IMR-90 (cell line): ENCODE measurements at regions of chr11 and their contacts with region 1.

Region 1: DNA sequence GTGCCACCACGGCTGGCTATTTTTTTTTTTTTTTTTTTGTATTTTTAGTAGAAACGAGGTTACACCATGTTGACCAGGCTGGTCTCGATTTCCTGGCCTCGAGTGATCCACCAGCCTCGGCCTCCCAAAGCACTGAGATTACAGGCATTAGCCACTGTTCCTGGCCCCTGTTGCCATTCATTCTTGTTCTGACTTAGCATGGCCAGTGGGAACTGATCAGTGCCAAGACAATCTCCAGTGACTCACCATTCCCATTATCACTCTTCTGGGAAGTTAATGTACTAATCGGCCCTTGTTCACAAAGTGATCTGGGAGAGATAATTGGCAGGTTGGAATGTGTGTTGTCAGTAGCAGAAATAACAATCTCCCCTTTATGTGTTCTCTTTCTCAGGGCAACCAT is 1099.4 kb downstream of the JRKL start:
- DNase-seq: no peak
- ATAC-seq: no peak
- H3K4me3 ChIP-seq: no peak overlapping the region
- H3K27ac ChIP-seq: no peak overlapping the region
- H3K4me1 ChIP-seq: no peaks in the 10 kb centered on the region
- H3K27me3 ChIP-seq: no peaks in the 10 kb centered on the region
- CTCF ChIP-seq: no peak
- POLR2A ChIP-seq: no peak
- RAD21 ChIP-seq: no peak

Region 2: DNA sequence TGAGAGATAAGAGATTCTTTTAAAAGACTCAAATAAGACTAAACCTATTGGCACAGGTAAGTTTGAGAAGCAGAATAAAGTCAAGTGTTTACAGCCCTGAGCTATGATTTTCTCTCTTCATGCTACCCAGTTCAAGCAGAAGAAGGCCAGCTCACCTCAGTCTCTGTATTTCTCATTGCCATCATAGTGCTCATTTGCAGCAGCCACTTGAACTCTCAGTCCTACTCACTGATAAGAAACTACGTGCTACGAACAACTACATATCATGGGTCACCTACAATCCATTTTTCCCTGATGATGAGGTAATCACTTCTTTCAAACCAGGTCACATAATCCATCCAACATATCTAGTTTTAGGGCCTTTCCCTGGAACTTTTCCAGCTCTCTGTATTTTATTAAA is 482.0 kb before region 1 on chr11:
- CTCF ChIA-PET with region 1: no interaction called
- POLR2A ChIA-PET with region 1: no interaction called
- dilution Hi-C with region 1: no loop called
- in situ Hi-C with region 1: no loop called
- intact Hi-C with region 1: no loop called
- DNase-seq: no peak
- ATAC-seq: no peak
- H3K4me3 ChIP-seq: no peak overlapping the region
- H3K27ac ChIP-seq: no peak overlapping the region
- H3K4me1 ChIP-seq: no peaks in the 10 kb centered on the region
- H3K27me3 ChIP-seq: no peaks in the 10 kb centered on the region
- CTCF ChIP-seq: no peak
- POLR2A ChIP-seq: no peak
- RAD21 ChIP-seq: no peak

Region 3: GRCh38 chr11:97345004-97345403 is 144.2 kb before region 1 on chr11:
- CTCF ChIA-PET with region 1: no interaction called
- POLR2A ChIA-PET with region 1: no interaction called
- dilution Hi-C with region 1: no loop called
- in situ Hi-C with region 1: no loop called
- intact Hi-C with region 1: no loop called
- DNase-seq: no peak
- ATAC-seq: no peak
- H3K4me3 ChIP-seq: no peak overlapping the region
- H3K27ac ChIP-seq: no peak overlapping the region
- H3K4me1 ChIP-seq: no peaks in the 10 kb centered on the region
- H3K27me3 ChIP-seq: no peaks in the 10 kb centered on the region
- CTCF ChIP-seq: no peak
- POLR2A ChIP-seq: no peak
- RAD21 ChIP-seq: no peak

Region 4: GRCh38 chr11:97548280-97548679 is 59.0 kb after region 1 on chr11:
- CTCF ChIA-PET with region 1: no interaction called
- POLR2A ChIA-PET with region 1: no interaction called
- dilution Hi-C with region 1: no loop called
- in situ Hi-C with region 1: no loop called
- intact Hi-C with region 1: loop called (anchors 10 kb)
- DNase-seq: no peak
- ATAC-seq: no peak
- H3K4me3 ChIP-seq: no peak overlapping the region
- H3K27ac ChIP-seq: no peak overlapping the region
- H3K4me1 ChIP-seq: no peaks in the 10 kb centered on the region
- H3K27me3 ChIP-seq: no peaks in the 10 kb centered on the region
- CTCF ChIP-seq: no peak
- POLR2A ChIP-seq: no peak
- RAD21 ChIP-seq: no peak

Region 5: DNA sequence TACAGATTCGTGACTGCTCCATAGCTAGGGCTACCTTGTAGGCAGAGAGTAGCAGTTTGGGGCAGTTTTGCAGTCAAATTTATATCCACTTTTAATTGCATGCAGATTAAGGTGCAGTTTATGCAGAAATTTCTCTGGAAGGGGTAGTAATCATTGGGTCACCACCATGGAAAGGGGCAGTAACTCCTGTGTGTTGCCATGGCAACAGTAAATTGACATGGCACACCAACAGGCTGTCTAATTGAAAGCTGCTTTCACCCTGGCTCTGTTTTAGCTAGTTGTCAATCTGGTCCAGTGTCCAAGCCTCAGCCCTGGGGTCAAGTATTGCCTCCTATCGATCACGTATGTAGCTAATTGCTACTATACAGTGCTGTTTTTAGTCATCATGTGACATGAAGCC is 745.4 kb after region 1 on chr11:
- CTCF ChIA-PET with region 1: no interaction called
- POLR2A ChIA-PET with region 1: no interaction called
- dilution Hi-C with region 1: no loop called
- in situ Hi-C with region 1: no loop called
- intact Hi-C with region 1: no loop called
- DNase-seq: no peak
- ATAC-seq: no peak
- H3K4me3 ChIP-seq: no peak overlapping the region
- H3K27ac ChIP-seq: no peak overlapping the region
- H3K4me1 ChIP-seq: no peaks in the 10 kb centered on the region
- H3K27me3 ChIP-seq: no peaks in the 10 kb centered on the region
- CTCF ChIP-seq: no peak
- POLR2A ChIP-seq: no peak
- RAD21 ChIP-seq: no peak